Aorta (tissue), 5 donors: ENCODE measurements at regions of chr7 and their contacts with region 1.

Region 1: DNA sequence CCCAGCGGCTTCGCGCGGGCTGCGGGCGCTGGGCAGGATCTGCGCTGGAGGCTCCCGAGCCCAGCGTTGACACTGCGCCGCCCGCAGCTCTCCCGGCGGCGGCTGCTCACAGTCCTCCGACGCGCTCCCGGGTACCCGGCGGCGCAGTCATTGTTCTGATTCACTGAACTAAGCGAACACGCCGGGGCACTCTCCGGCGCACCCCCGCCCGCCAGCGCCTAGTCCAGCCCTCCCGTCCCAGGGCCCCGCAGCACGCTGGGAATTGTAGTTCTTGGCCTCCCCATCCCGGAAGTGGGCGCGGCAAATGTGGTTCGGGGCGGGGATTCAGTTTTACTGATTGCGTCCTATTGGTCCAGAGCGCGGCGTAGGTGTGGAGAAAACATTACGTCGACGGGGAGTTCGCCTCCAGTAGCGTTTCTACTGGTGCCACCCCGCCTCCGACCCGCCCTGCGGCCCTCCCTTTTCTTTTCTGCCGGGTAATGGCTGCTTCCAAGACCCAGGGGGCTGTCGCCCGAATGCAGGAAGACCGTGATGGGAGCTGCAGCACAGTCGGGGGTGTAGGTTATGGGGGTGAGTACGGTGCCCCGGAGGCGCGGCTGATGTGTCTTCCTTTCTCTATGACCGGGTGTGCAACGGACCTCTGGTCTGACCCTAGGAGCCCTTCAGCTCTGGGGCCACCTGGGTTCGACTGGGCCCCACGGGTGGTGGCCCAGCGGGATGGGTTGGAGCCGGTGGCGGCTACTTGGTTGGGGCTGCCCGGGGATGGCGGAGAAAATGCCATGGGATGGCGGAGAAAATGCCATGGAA is at the starts of genes DOCK4 and ZNF277:
- DNase-seq: peak; percentile 99 to 100
- ATAC-seq: peak; percentile 98
- H3K4me3 ChIP-seq: peak within 1 kb of the TSS; percentile 87 to 98
- H3K27ac ChIP-seq: peak within 1 kb of the TSS; percentile 18 to 75
- H3K4me1 ChIP-seq: no peaks in the 10 kb centered on the region
- H3K27me3 ChIP-seq: no peaks in the 10 kb centered on the region
- total RNA-seq, gene DOCK4: 34.2 to 94.3 TPM
- total RNA-seq, gene ZNF277: 20.3 to 21.6 TPM

Region 2: GRCh38 chr7:111763221-111763801 is 443.1 kb before region 1 on chr7:
- intact Hi-C with region 1: loop called in 1 of 2 experiments (anchors 10 kb)
- DNase-seq: no peak
- ATAC-seq: peak; percentile 72
- H3K4me3 ChIP-seq: no peak overlapping the region
- H3K27ac ChIP-seq: no peak overlapping the region
- H3K4me1 ChIP-seq: no peaks in the 10 kb centered on the region
- H3K27me3 ChIP-seq: no peaks in the 10 kb centered on the region

Region 3: GRCh38 chr7:111987115-111987826 is 219.2 kb before region 1 on chr7:
- intact Hi-C with region 1: loop called in 1 of 2 experiments (anchors 10 kb)
- DNase-seq: no peak
- ATAC-seq: no peak
- H3K4me3 ChIP-seq: no peak overlapping the region
- H3K27ac ChIP-seq: no peak overlapping the region
- H3K4me1 ChIP-seq: no peaks in the 10 kb centered on the region
- H3K27me3 ChIP-seq: no peaks in the 10 kb centered on the region

Region 4: GRCh38 chr7:112143582-112143981 is 62.9 kb before region 1 on chr7:
- intact Hi-C with region 1: loop called in 1 of 2 experiments (anchors 5 kb)
- DNase-seq: peak in 1 of 2 donors; percentile 68
- ATAC-seq: peak; percentile 56
- H3K4me3 ChIP-seq: no peak overlapping the region
- H3K27ac ChIP-seq: no peak overlapping the region
- H3K4me1 ChIP-seq: peaks cover 0 to 5% of the 10 kb centered on the region in 2 donors
- H3K27me3 ChIP-seq: no peaks in the 10 kb centered on the region

Region 5: GRCh38 chr7:112449902-112450806 is 243.7 kb after region 1 on chr7 and contains the start of gene IFRD1:
- intact Hi-C with region 1: loop called in 1 of 2 experiments (anchors 2 kb)
- DNase-seq: peak; percentile 99 to 100
- ATAC-seq: peak; percentile 96
- H3K4me3 ChIP-seq: peak within 1 kb of the TSS; percentile 67 to 98
- H3K27ac ChIP-seq: peak within 1 kb of the TSS; percentile 88 to 100
- H3K4me1 ChIP-seq: no peaks in the 10 kb centered on the region
- H3K27me3 ChIP-seq: no peaks in the 10 kb centered on the region
- total RNA-seq, gene IFRD1: 67.0 to 138 TPM

Region 6: GRCh38 chr7:112481833-112482670 is 275.6 kb after region 1 on chr7:
- intact Hi-C with region 1: loop called in 1 of 2 experiments (anchors 5 kb)
- DNase-seq: peak in 1 of 2 donors; percentile 84
- ATAC-seq: peak; percentile 92
- H3K4me3 ChIP-seq: no peak overlapping the region
- H3K27ac ChIP-seq: peak overlapping the region in 1 of 2 donors; percentile 74
- H3K4me1 ChIP-seq: peaks cover 3 to 9% of the 10 kb centered on the region in 2 donors
- H3K27me3 ChIP-seq: no peaks in the 10 kb centered on the region